Tibial artery (tissue), 4 donors: ENCODE measurements at regions of chr1 and their contacts with region 1.

Region 1: DNA sequence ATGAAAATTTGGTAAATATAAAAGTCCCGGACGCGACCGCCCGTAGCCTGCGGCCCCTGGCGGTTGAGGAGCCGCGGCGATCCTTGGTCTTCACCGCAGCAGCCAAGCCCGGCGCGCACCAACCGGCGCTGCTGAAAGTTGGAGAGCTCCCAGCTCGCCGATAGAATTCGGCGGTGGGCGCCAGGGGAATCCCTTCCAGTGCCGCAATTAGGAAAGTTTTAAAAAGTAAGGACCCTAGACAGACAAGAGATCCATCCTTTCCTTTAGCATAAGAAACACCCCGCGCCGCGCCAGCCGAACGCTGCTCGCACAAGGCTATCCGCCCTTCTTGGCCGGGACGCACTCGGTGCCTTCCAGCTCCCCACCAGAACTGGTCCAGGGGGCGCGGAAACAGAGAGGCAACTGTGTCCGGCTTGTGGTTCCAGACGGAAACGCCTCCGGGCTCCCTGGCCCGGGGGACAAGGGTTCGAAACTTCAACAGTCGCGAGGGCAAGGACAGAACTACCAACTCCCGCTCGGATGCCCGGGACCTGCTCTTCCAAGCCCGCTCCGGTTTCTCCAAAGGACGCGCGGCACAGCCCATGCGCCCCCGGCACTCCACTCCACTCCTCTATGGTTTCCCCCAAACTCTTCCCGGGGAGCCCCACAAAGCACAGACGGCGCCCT is 1.7 kb downstream of the FAM78B start:
- DNase-seq: peak; percentile 29 to 66
- H3K4me3 ChIP-seq: peak overlapping the region; percentile 73 to 90
- H3K27ac ChIP-seq: no peak overlapping the region
- H3K4me1 ChIP-seq: peaks cover 0 to 31% (median 15%) of the 10 kb centered on the region in 4 donors
- H3K27me3 ChIP-seq: no peaks in the 10 kb centered on the region
- CTCF ChIP-seq: peak; percentile 34 to 45

Region 2: GRCh38 chr1:165742194-165742593 is 422.9 kb before region 1 on chr1:
- intact Hi-C with region 1: loop called (anchors 5 kb)
- DNase-seq: no peak
- H3K4me3 ChIP-seq: no peak overlapping the region
- H3K27ac ChIP-seq: no peak overlapping the region
- H3K4me1 ChIP-seq: no peaks in the 10 kb centered on the region
- H3K27me3 ChIP-seq: no peaks in the 10 kb centered on the region
- CTCF ChIP-seq: no peak

Region 3: DNA sequence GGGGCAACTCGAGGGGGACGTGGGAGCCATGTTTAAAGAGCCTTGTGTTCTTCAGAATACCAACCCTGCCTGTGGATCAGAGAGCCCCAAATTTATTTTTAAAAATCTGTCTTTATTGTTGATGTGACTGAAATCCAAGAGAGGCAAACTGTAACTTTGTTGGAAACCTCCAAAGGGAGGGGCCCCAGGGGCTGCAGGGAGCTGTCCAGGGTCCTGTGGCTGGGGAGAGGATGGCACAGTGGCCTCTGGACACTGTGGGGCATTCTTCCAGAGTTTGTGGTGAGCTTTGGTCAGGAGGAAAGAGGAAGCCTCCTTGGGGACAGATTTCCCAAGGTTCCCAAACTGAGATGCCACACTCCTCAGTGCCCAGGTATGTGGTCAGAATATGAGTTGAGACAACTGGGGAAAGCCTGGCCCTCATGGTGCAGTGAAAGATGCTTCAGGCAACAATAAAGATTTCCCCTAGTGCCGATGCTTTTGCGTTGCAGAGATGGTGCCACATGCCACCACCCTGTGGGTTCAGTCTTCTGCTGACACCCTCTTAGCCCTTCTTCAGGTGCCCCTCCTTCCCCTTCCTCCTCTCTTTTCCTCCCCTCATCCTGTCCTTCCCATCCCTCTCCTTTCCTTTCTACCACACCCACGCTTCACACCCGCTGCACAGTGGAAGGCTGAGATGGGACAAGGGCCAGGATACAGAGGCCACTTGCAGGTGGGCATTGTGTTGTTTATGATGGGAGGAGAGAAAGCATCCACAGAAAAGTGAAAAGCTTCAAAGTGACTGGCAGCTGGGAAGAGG is 215.6 kb before region 1 on chr1:
- intact Hi-C with region 1: no loop called
- DNase-seq: no peak
- H3K4me3 ChIP-seq: no peak overlapping the region
- H3K27ac ChIP-seq: no peak overlapping the region
- H3K4me1 ChIP-seq: no peaks in the 10 kb centered on the region
- H3K27me3 ChIP-seq: peaks cover 0 to 2% of the 10 kb centered on the region in 2 donors
- CTCF ChIP-seq: no peak